CD8-positive, alpha-beta memory T cell (primary cell): ENCODE measurements at regions of chr15 and their contacts with region 1.

Region 1: DNA sequence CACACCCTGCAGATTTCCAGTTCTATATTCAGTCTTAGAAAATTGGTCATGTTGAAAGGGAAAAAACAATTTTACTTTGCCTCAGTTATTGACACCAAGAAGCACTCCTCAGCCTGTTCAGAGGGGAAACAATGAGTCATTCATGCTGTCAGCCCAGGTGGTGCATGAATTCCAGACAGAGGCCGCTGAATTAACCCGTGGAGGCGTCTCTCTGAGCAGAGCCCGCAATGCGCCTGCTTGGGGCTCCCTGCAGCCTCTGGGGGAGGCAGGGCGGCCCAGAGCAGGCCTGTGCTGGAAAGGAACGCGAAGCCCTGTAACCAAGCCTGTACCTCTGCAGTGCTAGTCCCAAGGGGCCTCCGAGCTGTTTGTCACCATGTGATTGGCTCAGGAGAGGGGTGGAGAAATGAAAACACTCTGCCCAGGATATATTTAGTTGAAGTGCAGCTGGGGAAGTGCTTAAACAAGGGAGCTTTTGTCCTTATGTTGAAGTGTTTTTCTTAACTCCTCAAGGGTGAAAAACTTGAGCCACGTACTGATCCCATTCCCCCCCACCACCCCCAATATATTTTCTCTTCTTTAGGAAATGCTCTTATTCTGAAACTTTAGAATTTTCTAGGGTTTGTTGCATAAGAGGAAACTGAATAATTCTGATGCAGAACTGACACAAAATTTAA is 68.3 kb upstream of the CHD2 start:
- DNase-seq: peak; percentile 70 to 97 (median 84)
- H3K4me3 ChIP-seq: peak overlapping the region; percentile 30
- H3K4me3 Mint-ChIP-seq: peak overlapping the region; percentile 40 to 88 (median 80)
- H3K27ac ChIP-seq: peak overlapping the region; percentile 83
- H3K27ac Mint-ChIP-seq: peak overlapping the region; percentile 95 to 99 (median 97)
- H3K4me1 ChIP-seq: peaks cover 45% of the 10 kb centered on the region
- H3K4me1 Mint-ChIP-seq: peaks cover 34 to 45% (median 44%) of the 10 kb centered on the region in 3 donors
- H3K27me3 ChIP-seq: no peaks in the 10 kb centered on the region
- H3K27me3 Mint-ChIP-seq: peaks cover 0 to 2% of the 10 kb centered on the region in 2 donors

Region 2: DNA sequence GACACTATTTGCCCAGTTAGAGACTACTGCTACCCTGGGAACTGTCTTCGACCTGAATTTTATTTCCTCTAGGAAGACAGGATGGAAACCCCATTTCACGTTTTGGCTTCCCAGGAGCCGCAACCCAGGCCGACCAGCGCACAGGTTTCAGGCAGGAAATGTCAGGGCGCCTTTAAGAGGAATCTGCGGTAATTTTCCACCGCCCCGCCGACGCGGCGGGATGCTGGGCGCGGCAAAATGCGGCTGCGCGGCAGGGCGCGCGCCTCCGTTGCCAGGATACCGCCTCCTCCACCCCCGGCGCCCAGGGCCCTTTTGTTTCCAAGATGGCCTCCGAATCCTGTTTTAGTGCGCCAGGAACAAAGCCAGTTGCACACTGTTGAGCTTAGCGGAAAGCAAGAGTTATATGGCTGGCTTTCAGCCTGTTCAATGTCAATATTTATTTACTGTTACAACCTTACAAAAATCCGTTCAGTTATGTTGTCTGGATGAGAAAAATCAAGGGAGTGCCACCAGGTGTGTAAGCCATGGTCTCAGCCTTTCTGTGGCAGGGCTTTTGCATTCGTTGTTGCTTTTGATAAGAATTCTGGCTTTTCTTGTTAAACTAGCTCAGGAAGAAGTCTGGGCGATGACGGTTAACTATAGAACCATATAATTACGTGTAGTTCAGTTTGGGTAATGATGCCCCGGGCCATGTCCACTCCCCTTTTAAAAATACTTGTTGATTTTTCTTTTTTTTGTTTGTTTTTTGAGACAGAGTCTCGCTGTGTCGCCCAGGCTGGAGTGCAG is 11.4 kb before region 1 on chr15:
- CTCF ChIA-PET with region 1: interaction called, 44 read pairs
- POLR2A ChIA-PET with region 1: interaction called, 37 read pairs
- DNase-seq: peak; percentile 75 to 90 (median 86)
- H3K4me3 ChIP-seq: peak overlapping the region; percentile 60
- H3K4me3 Mint-ChIP-seq: peak overlapping the region; percentile 85 to 96 (median 92)
- H3K27ac ChIP-seq: peak overlapping the region; percentile 58
- H3K27ac Mint-ChIP-seq: peak overlapping the region; percentile 95 to 98 (median 97)
- H3K4me1 ChIP-seq: peaks cover 55% of the 10 kb centered on the region
- H3K4me1 Mint-ChIP-seq: peaks cover 32 to 60% (median 49%) of the 10 kb centered on the region in 3 donors
- H3K27me3 ChIP-seq: no peaks in the 10 kb centered on the region
- H3K27me3 Mint-ChIP-seq: no peaks in the 10 kb centered on the region